Aorta (tissue), 5 donors: ENCODE measurements at regions of chr12 and their contacts with region 1.

Region 1: DNA sequence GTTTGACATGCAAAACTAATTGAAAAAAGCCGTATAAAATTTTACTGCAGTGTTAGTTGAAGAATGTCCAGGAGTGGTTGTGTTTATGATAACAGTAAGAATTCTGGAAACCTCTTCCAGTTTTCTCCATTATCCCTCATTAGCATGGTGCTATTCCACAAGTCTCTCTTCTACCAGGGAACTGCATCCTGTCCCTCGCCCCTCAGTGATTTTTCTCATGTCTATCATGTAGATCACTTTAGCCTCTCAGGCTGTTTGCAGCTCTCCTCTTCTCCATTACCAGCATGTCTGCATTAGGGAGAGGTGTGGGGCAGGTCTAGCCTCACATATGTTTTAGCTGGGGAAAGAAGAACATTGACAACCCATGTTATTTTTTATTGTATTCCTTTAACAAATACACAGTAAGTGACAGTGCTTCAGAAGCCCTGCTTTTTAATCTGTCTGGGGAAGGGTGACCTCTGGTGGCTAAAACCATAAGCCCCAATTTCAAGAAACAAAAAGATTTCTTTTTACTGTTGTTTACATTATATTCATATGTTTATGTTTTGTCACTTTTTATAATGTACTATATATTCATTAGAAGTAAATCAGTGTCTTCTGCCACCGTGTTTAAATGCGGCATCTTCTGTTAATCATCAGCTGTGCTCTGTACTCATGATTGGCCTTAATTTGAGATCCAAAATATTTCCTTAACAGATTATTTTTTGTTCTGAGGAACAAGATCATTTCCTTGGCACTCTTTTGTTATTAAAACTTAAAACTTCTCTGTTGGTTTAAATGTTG is 70.7 kb downstream of the RASSF8 start:
- DNase-seq: no peak
- ATAC-seq: no peak
- H3K4me3 ChIP-seq: no peak overlapping the region
- H3K27ac ChIP-seq: no peak overlapping the region
- H3K4me1 ChIP-seq: peaks cover 8 to 10% of the 10 kb centered on the region in 2 donors
- H3K27me3 ChIP-seq: no peaks in the 10 kb centered on the region

Region 2: DNA sequence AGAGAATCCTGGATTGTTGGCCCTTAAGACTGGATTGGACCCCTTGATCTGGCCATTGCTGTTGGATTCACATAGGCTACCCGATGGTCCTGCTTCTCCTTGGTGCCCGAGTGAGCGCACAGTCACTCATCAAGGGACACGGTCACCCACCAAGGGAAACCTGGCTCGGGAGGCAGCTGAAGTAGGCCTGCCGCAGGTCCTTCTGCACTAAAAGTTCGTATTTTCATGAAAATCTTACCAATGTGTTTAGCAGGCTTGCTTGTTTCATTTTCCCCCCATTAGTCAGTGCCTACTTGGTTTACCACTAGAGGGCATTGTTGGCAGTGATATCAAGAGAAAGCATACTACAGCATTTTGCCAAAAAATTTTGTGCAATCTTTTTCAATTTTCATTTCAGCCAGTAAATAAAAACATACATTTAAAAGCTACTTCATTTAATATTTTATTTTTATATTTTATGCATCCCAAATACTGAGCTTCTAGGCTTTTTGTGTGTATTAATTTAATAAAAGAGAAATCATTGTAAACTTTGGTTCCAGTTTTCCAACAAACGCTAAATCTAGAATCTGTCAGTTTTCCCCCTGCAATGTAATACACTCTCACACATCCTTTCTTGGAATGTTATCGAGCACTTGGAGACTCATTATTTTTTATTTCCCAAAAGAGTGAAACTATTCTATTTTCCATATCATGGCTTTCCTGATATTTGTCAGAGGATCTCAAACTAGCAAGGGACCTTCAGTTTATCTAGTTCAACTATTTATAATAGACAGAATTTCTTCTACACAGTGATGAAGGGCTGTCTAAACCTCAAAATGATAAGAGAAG is 592.7 kb before region 1 on chr12:
- intact Hi-C with region 1: loop called (anchors 5 to 10 kb)
- DNase-seq: no peak
- ATAC-seq: peak; percentile 77
- H3K4me3 ChIP-seq: no peak overlapping the region
- H3K27ac ChIP-seq: no peak overlapping the region
- H3K4me1 ChIP-seq: peaks cover 0 to 2% of the 10 kb centered on the region in 2 donors
- H3K27me3 ChIP-seq: no peaks in the 10 kb centered on the region

Region 3: GRCh38 chr12:25677232-25677937 is 351.8 kb before region 1 on chr12:
- intact Hi-C with region 1: loop called in 1 of 2 experiments (anchors 10 kb)
- DNase-seq: no peak
- ATAC-seq: no peak
- H3K4me3 ChIP-seq: no peak overlapping the region
- H3K27ac ChIP-seq: no peak overlapping the region
- H3K4me1 ChIP-seq: no peaks in the 10 kb centered on the region
- H3K27me3 ChIP-seq: no peaks in the 10 kb centered on the region

Region 4: DNA sequence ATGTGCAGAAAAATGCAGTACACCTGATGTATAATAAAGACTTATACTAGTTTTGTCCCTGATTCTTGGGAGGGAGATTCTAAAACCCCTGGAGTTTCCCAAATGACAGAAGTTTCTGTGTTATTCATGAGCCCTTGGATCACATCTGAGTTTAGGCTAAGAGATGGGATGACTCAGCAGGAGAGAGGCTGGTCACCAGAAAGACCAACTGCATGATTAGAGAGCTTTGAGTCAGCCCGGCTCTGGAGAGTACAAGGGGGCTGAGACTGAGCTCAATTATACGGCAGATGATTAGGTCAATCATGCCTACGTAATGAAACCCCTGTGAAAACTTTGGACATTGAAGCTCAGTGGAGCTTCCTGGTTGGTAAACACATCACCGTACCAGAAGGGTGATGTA is 340.4 kb after region 1 on chr12:
- intact Hi-C with region 1: no loop called
- DNase-seq: peak in 1 of 2 donors; percentile 51
- ATAC-seq: peak; percentile 83
- H3K4me3 ChIP-seq: no peak overlapping the region
- H3K27ac ChIP-seq: no peak overlapping the region
- H3K4me1 ChIP-seq: peaks cover 0 to 1% of the 10 kb centered on the region in 2 donors
- H3K27me3 ChIP-seq: no peaks in the 10 kb centered on the region